ENCODE measurements at regions of chr3 and their contacts with region 1.

Region 1: DNA sequence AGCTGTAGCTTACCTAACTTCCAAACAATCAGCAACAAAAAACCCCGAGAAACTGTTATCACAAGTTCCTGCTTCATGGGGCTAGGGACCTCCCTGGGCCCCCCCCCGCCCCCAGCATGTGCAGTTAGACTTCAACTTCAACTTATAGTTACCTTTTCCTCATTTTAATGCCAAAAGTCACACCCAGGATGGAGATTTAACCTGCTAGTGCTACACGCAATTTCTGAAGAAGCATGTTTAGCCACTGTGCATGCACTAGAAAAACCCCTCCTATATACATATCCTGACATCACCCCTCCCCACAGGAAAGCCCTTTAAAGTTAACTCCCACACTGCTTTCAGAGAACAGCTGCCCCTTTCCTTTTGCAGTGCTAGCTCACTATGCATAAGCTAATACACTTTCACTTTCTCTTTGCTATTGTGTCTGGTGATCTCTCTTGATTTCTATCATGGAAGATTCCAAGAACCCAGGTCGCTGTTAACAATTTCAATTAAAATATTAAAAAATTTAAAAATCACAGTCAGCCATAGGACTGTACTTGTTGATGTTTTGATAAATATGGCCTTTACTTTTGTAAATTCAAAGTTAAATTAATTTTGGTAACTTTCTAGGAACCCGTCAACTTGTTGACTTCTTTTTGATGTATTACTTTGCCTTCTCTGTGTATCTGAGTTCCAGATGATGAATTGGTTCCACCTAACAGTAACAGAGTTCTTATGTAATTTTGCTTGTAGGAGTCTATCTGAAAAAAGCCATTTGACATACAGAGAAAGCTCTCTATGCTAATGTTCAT is 75.2 kb upstream of the ACAD9 start:
- DNase-seq: no peak
- ATAC-seq: no peak

Region 2: DNA sequence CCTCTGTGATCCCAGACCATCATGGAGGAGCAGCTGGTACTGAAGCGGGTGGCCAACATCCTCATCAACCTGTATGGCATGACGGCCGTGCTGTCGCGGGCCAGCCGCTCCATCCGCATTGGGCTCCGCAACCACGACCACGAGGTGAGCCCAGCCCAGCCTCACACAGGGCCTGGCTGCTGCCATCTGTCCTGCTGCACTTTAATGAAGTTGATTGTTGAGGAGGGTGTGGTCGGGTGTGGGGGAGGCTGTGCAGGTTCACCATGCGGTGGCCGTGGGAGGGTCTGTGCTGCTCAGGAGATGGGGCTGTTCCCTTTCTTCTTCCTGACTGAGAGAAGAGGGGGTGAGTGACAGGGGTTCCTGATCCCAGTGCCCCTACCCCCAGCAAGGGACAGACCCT is 105.8 kb after region 1 on chr3:
- intact Hi-C with region 1: loop called (anchors 5 kb)
- DNase-seq: no peak
- ATAC-seq: no peak

Region 3: GRCh38 chr3:128965704-128966217 is 161.5 kb after region 1 on chr3:
- intact Hi-C with region 1: no loop called
- DNase-seq: no peak
- ATAC-seq: no peak

Measured in Right ventricle myocardium inferior (tissue), 1 donor.